ENCODE measurements at regions of chr19 and their contacts with region 1.

Region 1: DNA sequence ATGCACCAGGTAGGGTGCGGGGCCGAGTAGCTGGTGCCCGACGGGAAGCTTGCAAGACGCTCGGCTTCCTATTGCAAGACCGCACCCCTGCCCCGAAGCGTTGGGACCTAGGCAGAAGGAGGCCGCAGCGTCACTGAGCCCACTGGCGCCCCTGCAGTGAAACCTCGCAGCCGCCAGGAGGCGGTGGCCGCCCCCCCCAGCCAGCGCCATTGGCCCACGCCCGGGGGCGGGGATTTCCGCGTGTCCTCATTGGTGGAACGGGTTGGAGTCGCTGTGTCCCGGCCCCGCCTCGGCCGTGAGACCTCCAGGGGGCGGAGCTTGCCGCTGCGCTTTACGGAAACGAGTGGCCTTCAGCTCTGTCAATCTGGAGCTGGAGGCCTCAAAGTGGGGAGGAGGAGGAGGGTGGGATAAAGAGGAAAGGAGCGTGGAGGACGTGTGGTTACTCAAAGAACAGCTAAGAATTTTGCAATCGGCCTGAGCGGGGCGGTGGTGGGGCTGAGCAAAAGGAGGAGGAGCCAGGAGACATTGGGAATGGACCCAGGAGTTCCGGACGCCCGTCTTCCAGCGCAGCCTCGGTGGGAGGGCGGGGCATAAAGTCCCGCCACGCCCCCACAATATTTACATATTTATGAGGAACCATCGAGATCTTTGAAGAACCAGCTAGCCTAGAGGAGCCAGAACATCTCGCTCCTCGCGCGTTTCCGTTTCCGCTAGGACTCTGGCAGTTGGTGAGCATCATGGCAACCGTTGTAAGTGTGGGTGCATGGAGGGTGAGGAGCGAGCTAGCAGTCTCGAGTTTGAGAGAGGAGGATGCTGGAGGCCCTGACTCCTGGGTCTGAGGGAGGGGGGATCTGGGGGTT is at the starts of genes GYS1 and RUVBL2:
- DNase-seq: peak; percentile 99
- H3K4me3 ChIP-seq: peak within 1 kb of the TSS; percentile 74 to 99
- H3K27ac ChIP-seq: peak within 1 kb of the TSS; percentile 82 to 86
- H3K4me1 ChIP-seq: peaks cover 0 to 17% of the 10 kb centered on the region in 2 experiments; a peak in 1 of 4 replicates
- H3K27me3 ChIP-seq: no peaks in the 10 kb centered on the region
- CTCF ChIP-seq: peak; percentile 81
- EP300 ChIP-seq: no peak; a peak in 1 of 4 replicates
- RAD21 ChIP-seq: no peak
- polyA plus RNA-seq, gene GYS1: 24.1 and 25.3 TPM in 2 replicates
- polyA plus RNA-seq, gene RUVBL2: 411 and 459 TPM in 2 replicates

Region 2: GRCh38 chr19:48965040-48965805 is 28.2 kb before region 1 on chr19 and contains the start of gene FTL:
- CTCF ChIA-PET with region 1: interaction called, 54 read pairs
- POLR2A ChIA-PET with region 1: interaction called, 3 read pairs
- DNase-seq: peak; percentile 99
- H3K4me3 ChIP-seq: peak within 1 kb of the TSS; percentile 68 to 74
- H3K27ac ChIP-seq: peak within 1 kb of the TSS; percentile 70 to 77
- H3K4me1 ChIP-seq: peaks cover 17 to 26% of the 10 kb centered on the region in 2 experiments; a peak in 3 of 4 replicates
- H3K27me3 ChIP-seq: no peaks in the 10 kb centered on the region
- CTCF ChIP-seq: no peak
- EP300 ChIP-seq: 0 out of 4 replicates have a peak, but pooled peaks of 1 of the 2 experiments have one; percentile 5
- RAD21 ChIP-seq: no peak
- polyA plus RNA-seq, gene FTL: 587 and 875 TPM in 2 replicates

Region 3: DNA sequence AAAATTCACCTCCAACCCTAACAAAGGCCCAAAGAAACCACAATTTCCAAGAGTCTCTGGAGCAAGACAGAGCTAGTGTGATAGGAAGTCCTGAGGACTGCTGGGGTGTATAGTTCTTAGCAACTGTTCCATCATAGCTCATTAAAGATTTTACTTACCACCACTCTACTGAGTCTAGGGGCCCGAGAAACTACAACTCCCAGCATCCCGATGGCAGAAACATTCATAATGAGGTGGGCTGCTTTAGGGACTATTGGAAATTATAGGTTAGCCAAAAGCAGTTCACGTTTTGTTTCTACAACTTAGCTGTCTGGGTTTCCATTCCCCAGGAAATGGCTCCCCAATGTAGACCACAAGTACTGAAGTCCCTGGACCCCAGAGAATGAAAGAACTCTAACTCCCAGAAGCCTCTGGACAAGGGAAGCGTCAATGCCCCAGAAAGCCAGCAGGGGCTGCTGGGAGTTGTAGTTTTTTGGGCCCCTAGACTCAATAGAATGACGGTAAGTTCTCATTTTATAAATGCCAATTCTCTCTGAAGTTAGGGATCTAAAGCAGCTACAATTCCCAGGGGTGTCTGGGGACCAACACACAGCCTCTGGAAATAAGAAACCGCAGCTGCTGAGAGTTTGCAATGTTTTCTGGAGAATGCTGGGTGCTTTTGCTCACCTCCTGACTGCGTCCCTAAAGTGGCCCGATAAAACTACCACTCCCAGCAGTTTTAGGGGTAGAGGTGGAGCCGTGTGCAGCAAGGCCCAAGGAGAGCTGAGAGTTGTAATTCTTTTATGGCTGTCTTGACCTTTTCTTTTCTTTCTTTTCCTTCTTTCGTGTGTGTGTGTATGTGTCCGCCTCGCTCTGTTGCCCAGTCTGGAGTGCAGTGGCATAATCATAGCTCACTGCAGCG is 17.2 kb before region 1 on chr19:
- CTCF ChIA-PET with region 1: interaction called, 54 read pairs
- POLR2A ChIA-PET with region 1: no interaction called
- DNase-seq: peak; percentile 72
- H3K4me3 ChIP-seq: no peak overlapping the region
- H3K27ac ChIP-seq: no peak overlapping the region
- H3K4me1 ChIP-seq: no peaks in the 10 kb centered on the region
- H3K27me3 ChIP-seq: no peaks in the 10 kb centered on the region
- CTCF ChIP-seq: no peak
- EP300 ChIP-seq: no peak
- RAD21 ChIP-seq: no peak

Region 4: GRCh38 chr19:48982280-48982679 is 11.1 kb before region 1 on chr19:
- CTCF ChIA-PET with region 1: interaction called, 45 read pairs
- POLR2A ChIA-PET with region 1: interaction called, 5 read pairs
- DNase-seq: no peak
- H3K4me3 ChIP-seq: no peak overlapping the region
- H3K27ac ChIP-seq: no peak overlapping the region
- H3K4me1 ChIP-seq: no peaks in the 10 kb centered on the region
- H3K27me3 ChIP-seq: no peaks in the 10 kb centered on the region
- CTCF ChIP-seq: no peak
- EP300 ChIP-seq: no peak
- RAD21 ChIP-seq: no peak

Region 5: DNA sequence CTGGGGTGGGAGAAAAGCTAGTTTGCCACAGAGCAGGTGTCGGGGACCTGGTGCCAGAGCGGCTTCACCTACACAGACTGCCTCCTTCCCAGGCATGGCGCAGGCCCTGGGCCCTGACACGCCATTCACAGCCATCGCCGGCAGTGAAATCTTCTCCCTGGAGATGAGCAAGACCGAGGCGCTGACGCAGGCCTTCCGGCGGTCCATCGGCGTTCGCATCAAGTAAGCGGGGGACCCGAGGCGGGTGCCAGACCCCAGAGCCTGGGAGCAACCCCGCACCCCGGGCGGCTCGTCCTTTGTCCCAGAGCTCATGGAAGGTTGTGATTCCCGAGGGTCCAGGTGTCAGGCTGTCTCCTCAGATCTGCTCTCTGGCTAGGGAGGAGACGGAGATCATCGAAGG is 13.5 kb after region 1 on chr19:
- CTCF ChIA-PET with region 1: interaction called, 68 read pairs
- POLR2A ChIA-PET with region 1: no interaction called
- DNase-seq: no peak
- H3K4me3 ChIP-seq: no peak overlapping the region
- H3K27ac ChIP-seq: no peak overlapping the region
- H3K4me1 ChIP-seq: no peaks in the 10 kb centered on the region
- H3K27me3 ChIP-seq: no peaks in the 10 kb centered on the region
- CTCF ChIP-seq: no peak
- EP300 ChIP-seq: no peak
- RAD21 ChIP-seq: no peak

Region 6: DNA sequence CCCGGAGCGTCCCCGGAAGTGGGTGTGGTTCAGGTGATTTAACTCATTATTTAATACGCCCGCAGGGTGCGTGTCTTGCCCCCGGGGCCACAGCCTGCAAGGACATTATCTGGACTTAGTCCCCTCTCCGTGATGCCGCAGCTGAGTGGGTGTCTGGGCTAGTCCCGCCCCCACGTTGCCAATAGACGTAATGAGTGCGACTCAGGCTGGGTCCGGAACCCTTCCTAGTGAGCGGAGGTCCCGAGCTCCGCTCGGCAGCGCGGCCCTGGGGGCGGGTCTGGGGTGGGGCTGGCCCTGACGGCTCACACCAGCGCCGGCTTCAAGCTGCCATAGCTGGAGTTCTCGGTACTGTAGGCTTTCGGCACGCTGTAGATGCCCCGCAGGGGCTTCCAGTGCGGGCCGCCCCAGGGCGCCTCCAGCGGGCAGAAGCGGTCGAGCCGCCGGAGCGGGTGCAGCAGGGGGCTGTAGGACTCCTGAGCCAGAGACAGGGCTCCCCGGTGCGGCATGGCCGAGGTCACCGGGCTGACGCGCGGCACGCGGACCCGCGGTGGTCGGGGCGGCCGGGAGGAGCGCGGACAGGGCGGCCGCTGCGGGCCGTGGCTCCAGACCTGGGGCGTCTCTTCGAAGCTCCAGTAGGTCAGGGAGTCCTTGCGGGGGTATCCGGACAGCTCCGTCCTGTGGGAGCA is 24.4 kb after region 1 on chr19:
- CTCF ChIA-PET with region 1: interaction called, 68 read pairs
- POLR2A ChIA-PET with region 1: no interaction called
- DNase-seq: peak; percentile 89
- H3K4me3 ChIP-seq: peak overlapping the region; percentile 46 to 60
- H3K27ac ChIP-seq: no peak overlapping the region
- H3K4me1 ChIP-seq: peaks cover 0 to 35% of the 10 kb centered on the region in 2 experiments; a peak in 1 of 4 replicates
- H3K27me3 ChIP-seq: no peaks in the 10 kb centered on the region
- CTCF ChIP-seq: peak; percentile 57
- EP300 ChIP-seq: no peak
- RAD21 ChIP-seq: no peak

Region 7: GRCh38 chr19:49056010-49056901 is 62.9 kb after region 1 on chr19:
- CTCF ChIA-PET with region 1: interaction called, 10 read pairs
- POLR2A ChIA-PET with region 1: no interaction called
- DNase-seq: peak; percentile 91
- H3K4me3 ChIP-seq: peak overlapping the region; percentile 55 to 71
- H3K27ac ChIP-seq: peak overlapping the region in 1 of 2 experiments; percentile 40; a peak in 1 of 4 replicates
- H3K4me1 ChIP-seq: peaks cover 0 to 15% of the 10 kb centered on the region in 2 experiments; a peak in 2 of 4 replicates
- H3K27me3 ChIP-seq: no peaks in the 10 kb centered on the region
- CTCF ChIP-seq: peak; percentile 39
- EP300 ChIP-seq: no peak
- RAD21 ChIP-seq: no peak

Measured in SK-N-SH (cell line).